Lower leg skin (tissue), 4 donors: ENCODE measurements at regions of chr2 and their contacts with region 1.

Region 1: GRCh38 chr2:149017116-149017985 is 21.1 kb upstream of the LYPD6B start:
- DNase-seq: peak; percentile 76 to 90
- H3K4me3 ChIP-seq: no peak overlapping the region
- CTCF ChIP-seq: peak in 1 of 3 donors; percentile 66
- POLR2A ChIP-seq: no peak

Region 2: DNA sequence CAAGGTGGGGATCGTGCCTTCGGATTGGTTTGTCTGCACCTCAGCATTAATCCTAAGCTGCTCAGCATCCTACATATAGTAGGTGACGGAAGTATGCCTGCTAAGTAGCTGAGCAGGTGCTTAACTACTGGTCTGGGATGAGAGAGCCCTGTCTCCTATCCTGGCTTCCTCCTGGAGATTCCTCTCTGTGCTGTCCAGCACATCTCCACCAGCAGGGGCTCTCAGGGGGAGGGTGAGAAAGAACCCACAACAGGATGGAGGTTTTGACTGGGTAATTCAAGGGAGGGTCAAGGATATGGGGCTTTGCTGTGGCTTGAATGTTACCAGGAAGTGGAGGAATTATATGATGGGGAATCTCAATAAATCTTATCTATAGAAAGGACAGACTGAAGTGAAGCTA is 187.7 kb before region 1 on chr2:
- intact Hi-C with region 1: no loop called
- DNase-seq: no peak
- H3K4me3 ChIP-seq: no peak overlapping the region
- CTCF ChIP-seq: no peak
- POLR2A ChIP-seq: no peak

Region 3: DNA sequence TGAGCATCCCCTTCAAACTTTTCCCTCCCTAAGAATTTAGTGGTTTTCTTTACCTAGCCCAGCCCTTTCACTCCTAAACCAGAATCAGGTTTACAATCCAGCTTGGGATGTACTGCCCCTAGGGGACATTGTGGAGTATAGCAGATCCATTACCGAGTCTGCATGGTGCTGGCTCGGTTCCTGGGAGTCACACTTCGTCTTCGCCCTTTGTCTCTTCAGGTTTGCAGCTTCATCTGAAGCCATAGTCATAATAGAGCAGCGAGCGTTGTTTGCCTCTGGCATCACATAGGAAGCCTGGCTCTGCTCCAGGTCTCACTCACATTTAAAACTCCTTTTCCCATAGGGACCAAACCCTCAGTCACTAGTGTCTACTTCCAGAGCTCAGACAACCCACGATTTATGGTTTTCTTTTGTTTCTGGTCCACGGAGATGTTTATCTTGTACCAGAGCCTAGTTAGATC is 296.2 kb after region 1 on chr2:
- intact Hi-C with region 1: loop called (anchors 10 kb)
- DNase-seq: peak in 1 of 2 donors; percentile 40
- H3K4me3 ChIP-seq: no peak overlapping the region
- CTCF ChIP-seq: peak in 1 of 3 donors; percentile 9
- POLR2A ChIP-seq: no peak

Region 4: DNA sequence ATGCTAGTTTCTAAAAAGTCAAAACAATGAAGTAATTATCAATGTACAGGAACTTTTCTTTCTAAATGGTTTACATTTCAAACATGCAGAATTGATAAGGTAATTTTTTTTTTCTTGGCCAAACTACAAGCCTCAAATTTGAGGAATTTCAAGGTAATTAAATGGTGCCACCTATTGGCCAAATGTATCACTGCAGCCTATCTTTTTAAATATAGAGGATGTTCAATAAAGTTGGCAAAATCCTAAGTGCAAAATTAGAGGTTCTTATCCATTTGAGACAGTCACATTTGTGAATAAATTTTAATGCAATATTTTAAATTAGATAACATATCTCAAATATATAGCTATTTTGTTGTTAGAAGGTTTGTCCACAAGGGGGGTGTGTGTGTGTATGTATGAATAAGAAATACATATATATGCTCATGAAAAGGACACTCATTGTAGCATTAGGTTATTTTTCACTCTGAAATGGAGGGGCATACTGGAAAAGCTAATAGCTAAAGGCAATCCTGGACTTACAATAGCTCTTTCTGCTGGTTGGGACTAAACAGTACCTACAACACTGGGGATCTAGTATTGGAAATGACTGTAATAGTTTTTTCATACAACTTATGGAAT is 544.1 kb after region 1 on chr2:
- intact Hi-C with region 1: loop called (anchors 5 kb)
- DNase-seq: no peak
- H3K4me3 ChIP-seq: no peak overlapping the region
- CTCF ChIP-seq: peak in 1 of 3 donors; percentile 52
- POLR2A ChIP-seq: no peak